Right ventricle myocardium inferior (tissue), 1 donor: ENCODE measurements at regions of chr9 and their contacts with region 1.

Region 1: GRCh38 chr9:97529363-97530076 is 28.1 kb downstream of the TMOD1 start:
- DNase-seq: no peak
- ATAC-seq: peak; percentile 85

Region 2: DNA sequence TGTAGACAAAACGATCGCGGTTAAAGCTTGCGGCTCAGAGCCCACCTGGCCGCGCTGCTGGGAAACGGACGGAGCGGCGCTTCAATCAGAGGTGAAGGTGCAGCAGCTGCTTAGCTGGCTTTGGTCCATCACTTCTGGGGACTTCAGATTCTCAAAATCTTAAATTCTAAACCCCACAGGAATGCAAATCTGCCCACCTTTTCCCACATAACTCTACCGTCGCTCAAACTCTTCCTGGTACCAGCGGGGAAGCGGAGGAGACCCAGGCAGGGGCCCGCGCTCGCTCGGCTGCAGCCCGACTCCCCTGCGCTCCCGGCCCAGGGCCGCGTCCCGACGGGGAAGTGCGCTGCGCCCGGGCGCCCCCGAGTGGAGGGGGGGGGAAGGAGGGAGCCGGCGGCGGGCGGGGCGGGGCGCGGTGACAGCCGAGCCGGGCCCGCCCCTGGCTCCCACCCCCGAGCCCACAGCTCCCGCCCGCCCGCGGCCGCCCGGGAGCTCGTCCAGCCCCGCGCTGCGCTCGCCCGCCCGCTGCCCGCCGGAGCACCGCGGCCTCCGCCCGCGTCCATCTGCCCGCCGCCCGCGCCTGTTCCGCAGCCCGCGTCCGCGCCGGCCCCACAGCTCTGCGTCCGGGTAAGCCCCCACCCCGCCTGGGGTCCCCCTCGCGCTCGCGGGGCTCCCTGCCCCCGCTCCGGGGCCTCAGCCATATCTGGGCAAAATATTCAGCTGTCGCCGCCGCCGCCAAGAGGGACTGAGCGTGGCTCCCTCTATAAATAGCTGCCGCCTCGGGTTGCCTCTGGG is 28.1 kb before region 1 on chr9 and contains the start of gene TMOD1:
- intact Hi-C with region 1: loop called (anchors 2 kb)
- DNase-seq: peak; percentile 84
- ATAC-seq: peak; percentile 84
- total RNA-seq, gene TMOD1: 192 TPM

Region 3: DNA sequence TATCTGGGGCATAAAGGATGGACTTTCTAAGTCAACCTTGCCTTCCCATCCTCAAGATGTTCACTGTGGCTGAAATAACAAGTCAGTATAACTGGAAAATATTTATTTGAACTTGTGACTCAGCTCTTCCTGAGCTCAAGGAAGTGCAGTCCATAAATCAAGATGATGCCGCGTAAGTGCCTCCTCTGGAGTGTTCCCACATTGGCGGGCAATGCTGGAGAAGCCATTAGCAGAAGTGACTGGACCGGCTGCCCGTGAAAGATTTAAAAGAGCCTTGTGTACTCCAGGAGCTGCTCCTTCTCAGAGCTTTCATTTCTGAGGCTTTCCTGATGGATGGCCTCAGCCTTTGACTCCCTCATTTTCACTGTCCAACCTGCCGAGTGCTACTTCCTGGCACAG is 10.6 kb before region 1 on chr9:
- intact Hi-C with region 1: loop called (anchors 1 kb)
- DNase-seq: no peak
- ATAC-seq: no peak

Region 4: GRCh38 chr9:97773723-97774122 is 244.2 kb after region 1 on chr9:
- intact Hi-C with region 1: no loop called
- DNase-seq: no peak
- ATAC-seq: no peak